ENCODE measurements at regions of chr13 and their contacts with region 1.

Region 1: DNA sequence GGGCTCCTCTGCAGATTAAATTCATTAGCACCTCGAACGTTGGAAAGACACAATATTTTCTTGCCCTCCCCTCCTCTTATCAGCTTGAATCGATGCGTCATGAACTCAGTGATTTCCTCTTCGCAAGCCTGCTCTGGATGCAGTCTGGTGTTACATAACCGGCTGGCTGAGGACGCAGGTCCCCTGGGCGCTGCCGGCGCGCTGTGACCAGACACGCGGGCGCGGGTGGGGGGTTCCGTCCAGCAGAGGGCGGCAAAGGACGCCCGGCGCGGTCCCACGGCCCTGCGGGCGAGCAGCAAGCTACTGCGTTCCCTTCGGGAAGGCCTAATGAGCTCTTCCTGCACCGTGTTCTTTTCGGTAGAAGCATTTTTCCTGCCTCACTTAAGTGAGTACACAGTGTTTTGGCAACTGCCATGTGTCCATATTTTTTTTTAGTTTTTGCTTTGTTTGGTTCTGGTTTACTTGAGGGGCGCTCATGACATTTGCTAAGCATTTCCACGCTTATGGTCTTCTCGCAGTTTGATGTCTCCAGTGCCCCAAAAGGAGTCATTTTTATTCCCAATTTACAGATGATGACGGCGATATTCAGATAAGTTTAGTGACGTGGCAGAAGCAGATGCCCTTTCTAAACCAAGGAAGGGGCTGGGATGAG is 112.2 kb upstream of the MBNL2 start:
- DNase-seq: peak; percentile 77
- ATAC-seq: peak; percentile 96
- H3K4me3 ChIP-seq: no peak overlapping the region
- H3K4me3 Mint-ChIP-seq: no peak overlapping the region
- H3K27ac ChIP-seq: no peak overlapping the region
- H3K27ac Mint-ChIP-seq: no peak overlapping the region
- H3K4me1 ChIP-seq: peaks cover 7 to 11% of the 10 kb centered on the region in 2 donors
- H3K4me1 Mint-ChIP-seq: peaks cover 3% of the 10 kb centered on the region
- H3K27me3 ChIP-seq: peaks cover 0 to 10% (median 0%) of the 10 kb centered on the region in 4 experiments
- H3K27me3 Mint-ChIP-seq: peaks cover 22% of the 10 kb centered on the region
- CTCF ChIP-seq: peak; percentile 94

Region 2: GRCh38 chr13:96672016-96672415 is 438.0 kb before region 1 on chr13:
- CTCF ChIA-PET with region 1: no interaction called
- POLR2A ChIA-PET with region 1: no interaction called
- intact Hi-C with region 1: no loop called
- DNase-seq: no peak
- ATAC-seq: no peak
- H3K4me3 ChIP-seq: no peak overlapping the region
- H3K4me3 Mint-ChIP-seq: no peak overlapping the region
- H3K27ac ChIP-seq: no peak overlapping the region
- H3K27ac Mint-ChIP-seq: no peak overlapping the region
- H3K4me1 ChIP-seq: no peaks in the 10 kb centered on the region
- H3K4me1 Mint-ChIP-seq: no peaks in the 10 kb centered on the region
- H3K27me3 ChIP-seq: no peaks in the 10 kb centered on the region
- H3K27me3 Mint-ChIP-seq: no peaks in the 10 kb centered on the region
- CTCF ChIP-seq: no peak

Region 3: GRCh38 chr13:97212601-97213040 is 102.7 kb after region 1 on chr13:
- CTCF ChIA-PET with region 1: interaction called, 13 read pairs
- POLR2A ChIA-PET with region 1: no interaction called
- intact Hi-C with region 1: no loop called
- DNase-seq: no peak
- ATAC-seq: no peak
- H3K4me3 ChIP-seq: no peak overlapping the region
- H3K4me3 Mint-ChIP-seq: no peak overlapping the region
- H3K27ac ChIP-seq: no peak overlapping the region
- H3K27ac Mint-ChIP-seq: no peak overlapping the region
- H3K4me1 ChIP-seq: no peaks in the 10 kb centered on the region
- H3K4me1 Mint-ChIP-seq: no peaks in the 10 kb centered on the region
- H3K27me3 ChIP-seq: no peaks in the 10 kb centered on the region
- H3K27me3 Mint-ChIP-seq: peaks cover 4% of the 10 kb centered on the region
- CTCF ChIP-seq: no peak

Region 4: GRCh38 chr13:97333983-97334382 is 224.0 kb after region 1 on chr13:
- CTCF ChIA-PET with region 1: interaction called, 11 read pairs
- POLR2A ChIA-PET with region 1: no interaction called
- intact Hi-C with region 1: no loop called
- DNase-seq: no peak
- ATAC-seq: no peak
- H3K4me3 ChIP-seq: no peak overlapping the region
- H3K4me3 Mint-ChIP-seq: no peak overlapping the region
- H3K27ac ChIP-seq: no peak overlapping the region
- H3K27ac Mint-ChIP-seq: no peak overlapping the region
- H3K4me1 ChIP-seq: no peaks in the 10 kb centered on the region
- H3K4me1 Mint-ChIP-seq: no peaks in the 10 kb centered on the region
- H3K27me3 ChIP-seq: no peaks in the 10 kb centered on the region
- H3K27me3 Mint-ChIP-seq: no peaks in the 10 kb centered on the region
- CTCF ChIP-seq: no peak

Region 5: GRCh38 chr13:97353927-97354675 is 244.1 kb after region 1 on chr13:
- CTCF ChIA-PET with region 1: interaction called, 307 read pairs
- POLR2A ChIA-PET with region 1: interaction called, 4 read pairs
- intact Hi-C with region 1: loop called (anchors 1 kb)
- DNase-seq: no peak
- ATAC-seq: no peak
- H3K4me3 ChIP-seq: no peak overlapping the region
- H3K4me3 Mint-ChIP-seq: no peak overlapping the region
- H3K27ac ChIP-seq: no peak overlapping the region
- H3K27ac Mint-ChIP-seq: no peak overlapping the region
- H3K4me1 ChIP-seq: no peaks in the 10 kb centered on the region
- H3K4me1 Mint-ChIP-seq: no peaks in the 10 kb centered on the region
- H3K27me3 ChIP-seq: no peaks in the 10 kb centered on the region
- H3K27me3 Mint-ChIP-seq: no peaks in the 10 kb centered on the region
- CTCF ChIP-seq: no peak

Region 6: GRCh38 chr13:97367016-97367822 is 257.3 kb after region 1 on chr13:
- CTCF ChIA-PET with region 1: interaction called, 307 read pairs
- POLR2A ChIA-PET with region 1: no interaction called
- intact Hi-C with region 1: no loop called
- DNase-seq: no peak
- ATAC-seq: no peak
- H3K4me3 ChIP-seq: no peak overlapping the region
- H3K4me3 Mint-ChIP-seq: no peak overlapping the region
- H3K27ac ChIP-seq: no peak overlapping the region
- H3K27ac Mint-ChIP-seq: peak overlapping the region; percentile 34
- H3K4me1 ChIP-seq: peaks cover 5 to 6% of the 10 kb centered on the region in 2 donors
- H3K4me1 Mint-ChIP-seq: peaks cover 19% of the 10 kb centered on the region
- H3K27me3 ChIP-seq: no peaks in the 10 kb centered on the region
- H3K27me3 Mint-ChIP-seq: no peaks in the 10 kb centered on the region
- CTCF ChIP-seq: no peak

Measured in B cell (primary cell).